Naive thymus-derived CD4-positive, alpha-beta T cell (primary cell): ENCODE measurements at regions of chr6 and their contacts with region 1.

Region 1: DNA sequence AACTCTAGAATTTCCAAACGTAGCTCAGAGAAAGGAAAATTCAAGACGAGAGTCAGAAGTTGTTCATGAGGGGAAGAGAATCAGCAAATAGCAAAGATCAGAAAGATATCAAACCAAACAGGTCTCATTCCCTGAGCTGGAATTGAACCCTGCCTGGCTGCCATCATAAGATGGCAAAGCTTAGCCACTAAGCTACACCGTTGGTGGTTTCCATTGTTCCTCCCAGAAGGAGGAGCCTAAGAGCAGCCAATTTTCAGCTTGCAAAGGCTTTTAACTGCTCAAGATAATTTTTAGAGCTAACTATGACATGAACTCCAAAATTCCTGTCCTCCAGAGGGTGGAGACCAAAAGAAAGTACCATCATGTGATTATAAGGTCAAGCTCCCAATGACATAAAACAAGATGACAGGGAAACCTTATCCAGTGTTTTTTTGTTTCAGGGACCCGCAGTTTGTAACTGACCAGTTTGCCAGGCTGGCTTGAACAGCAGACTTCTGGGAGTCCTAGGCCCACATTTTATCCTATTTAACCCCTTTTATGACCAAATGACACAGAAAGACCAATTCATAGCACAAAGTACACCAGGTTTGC is 55.9 kb downstream of the COL11A2 start:
- DNase-seq: no peak
- ATAC-seq: no peak
- H3K4me3 ChIP-seq: no peak overlapping the region
- H3K4me3 Mint-ChIP-seq: no peak overlapping the region
- H3K27ac ChIP-seq: no peak overlapping the region
- H3K27ac Mint-ChIP-seq: no peak overlapping the region
- H3K4me1 ChIP-seq: no peaks in the 10 kb centered on the region
- H3K4me1 Mint-ChIP-seq: peaks cover 0 to 2% (median 0%) of the 10 kb centered on the region in 7 donors
- H3K27me3 ChIP-seq: no peaks in the 10 kb centered on the region
- H3K27me3 Mint-ChIP-seq: peaks cover 4 to 39% (median 10%) of the 10 kb centered on the region in 5 donors

Region 2: GRCh38 chr6:33066917-33067521 is 69.4 kb before region 1 on chr6:
- CTCF ChIA-PET with region 1: no interaction called
- POLR2A ChIA-PET with region 1: interaction called, 12 read pairs
- intact Hi-C with region 1: no loop called
- DNase-seq: no peak
- ATAC-seq: no peak
- H3K4me3 ChIP-seq: no peak overlapping the region
- H3K4me3 Mint-ChIP-seq: no peak overlapping the region
- H3K27ac ChIP-seq: no peak overlapping the region
- H3K27ac Mint-ChIP-seq: no peak overlapping the region
- H3K4me1 ChIP-seq: peaks cover 0 to 11% of the 10 kb centered on the region in 2 donors
- H3K4me1 Mint-ChIP-seq: peaks cover 0 to 15% (median 8%) of the 10 kb centered on the region in 7 donors
- H3K27me3 ChIP-seq: no peaks in the 10 kb centered on the region
- H3K27me3 Mint-ChIP-seq: peaks cover 0 to 6% (median 4%) of the 10 kb centered on the region in 5 donors